ENCODE measurements at regions of chr11 and their contacts with region 1.

Region 1: DNA sequence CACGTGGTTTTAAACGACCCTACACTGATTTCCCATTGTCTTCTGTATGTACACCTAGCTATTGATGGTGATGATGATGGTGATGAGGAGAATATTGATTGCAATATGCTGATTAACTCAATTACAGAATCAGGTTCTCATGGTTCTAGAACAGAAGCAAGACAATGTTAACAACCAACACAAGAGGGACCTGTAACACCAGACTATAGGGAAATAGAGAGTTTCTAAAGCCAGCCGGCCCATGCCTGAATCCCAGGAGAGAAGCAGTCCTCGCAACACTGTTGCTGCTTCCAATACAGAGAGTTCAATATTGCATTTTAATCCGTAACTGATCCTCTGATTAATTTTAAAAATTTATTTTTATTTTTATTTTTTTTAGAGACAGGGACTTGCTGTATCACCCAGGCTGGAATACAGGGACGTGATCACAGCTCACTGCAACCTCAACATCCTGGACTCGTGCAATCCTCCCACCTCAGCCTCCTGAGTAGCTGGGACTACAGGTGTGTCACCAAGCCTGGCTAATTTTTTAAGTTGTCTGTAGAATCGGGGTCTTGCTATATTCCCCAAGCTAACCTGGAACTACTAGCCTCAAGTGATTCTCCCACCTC is 22.2 kb upstream of the UBASH3B start:
- DNase-seq: peak; percentile 83
- H3K4me3 ChIP-seq: no peak overlapping the region
- H3K27ac ChIP-seq: no peak overlapping the region
- H3K4me1 ChIP-seq: peaks cover 29% of the 10 kb centered on the region
- H3K27me3 ChIP-seq: no peaks in the 10 kb centered on the region

Region 2: GRCh38 chr11:122781378-122782195 is 148.3 kb after region 1 on chr11:
- in situ Hi-C with region 1: loop called (anchors 5 kb)
- DNase-seq: peak; percentile 97
- H3K4me3 ChIP-seq: no peak overlapping the region
- H3K27ac ChIP-seq: 0 out of 2 replicates have a peak overlapping the region, but pooled peaks have one; percentile 5
- H3K4me1 ChIP-seq: peaks cover 27% of the 10 kb centered on the region
- H3K27me3 ChIP-seq: no peaks in the 10 kb centered on the region

Region 3: DNA sequence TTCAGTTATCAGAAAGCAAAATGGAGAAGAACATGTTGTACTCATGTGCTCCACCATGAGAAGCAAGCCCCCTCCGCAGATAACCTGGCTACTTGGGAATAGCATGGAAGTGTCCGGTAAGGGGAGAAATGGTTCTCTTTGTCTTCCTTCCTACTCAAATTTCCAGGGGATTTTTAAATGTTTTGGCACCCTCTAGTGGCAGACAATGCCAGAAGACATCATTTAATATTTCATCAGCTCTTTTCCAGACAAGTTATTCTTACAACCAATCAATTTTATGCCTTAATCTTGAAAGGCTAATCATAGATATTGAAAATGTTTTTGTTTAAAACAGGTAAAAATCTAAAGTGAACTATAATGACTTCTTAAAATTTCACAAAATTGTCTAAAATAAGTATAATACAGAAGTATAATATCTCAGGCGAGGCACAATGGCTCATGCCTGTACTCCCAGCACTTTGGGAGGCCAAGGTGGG is 220.7 kb after region 1 on chr11:
- in situ Hi-C with region 1: loop called (anchors 5 kb)
- DNase-seq: peak; percentile 83
- H3K4me3 ChIP-seq: no peak overlapping the region
- H3K27ac ChIP-seq: peak overlapping the region; percentile 28
- H3K4me1 ChIP-seq: peaks cover 36% of the 10 kb centered on the region
- H3K27me3 ChIP-seq: no peaks in the 10 kb centered on the region

Region 4: DNA sequence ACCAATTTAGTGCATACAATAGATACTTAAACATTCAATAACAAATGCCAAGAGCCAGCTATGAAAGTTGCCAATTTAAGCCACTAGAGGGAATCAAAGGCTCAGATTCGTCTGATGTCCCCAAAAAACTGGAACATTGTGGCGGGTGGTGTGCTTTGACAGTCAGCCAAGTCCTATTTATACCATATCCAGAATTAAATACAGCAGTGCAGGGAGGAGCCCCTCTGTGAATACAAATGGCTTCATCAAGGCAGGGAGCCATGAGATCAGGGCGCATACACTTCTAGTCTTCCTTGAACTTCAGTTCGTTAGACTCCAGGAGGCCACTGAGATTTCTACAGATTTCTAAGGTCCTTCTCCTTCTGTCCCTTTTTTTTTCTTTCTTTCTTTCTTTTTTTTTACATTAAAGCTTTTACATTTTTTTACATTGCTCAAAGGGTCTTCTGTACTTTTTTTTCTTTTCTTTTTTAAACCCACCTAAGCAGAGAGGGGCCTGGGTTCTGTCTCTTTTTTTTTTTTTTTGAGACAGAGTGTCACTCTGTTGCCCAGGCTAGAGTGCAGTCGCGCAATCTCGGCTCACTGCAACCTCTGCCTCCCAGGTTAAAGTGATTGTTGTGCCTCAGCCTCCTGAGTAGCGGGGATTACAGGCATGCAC is 470.1 kb after region 1 on chr11:
- in situ Hi-C with region 1: no loop called
- DNase-seq: peak; percentile 86
- H3K4me3 ChIP-seq: no peak overlapping the region
- H3K27ac ChIP-seq: peak overlapping the region; percentile 73
- H3K4me1 ChIP-seq: peaks cover 62% of the 10 kb centered on the region
- H3K27me3 ChIP-seq: no peaks in the 10 kb centered on the region

Measured in GM23248 (cell line).